Adrenal gland (tissue), 19 donors: ENCODE measurements at regions of chr10 and their contacts with region 1.

Region 1: DNA sequence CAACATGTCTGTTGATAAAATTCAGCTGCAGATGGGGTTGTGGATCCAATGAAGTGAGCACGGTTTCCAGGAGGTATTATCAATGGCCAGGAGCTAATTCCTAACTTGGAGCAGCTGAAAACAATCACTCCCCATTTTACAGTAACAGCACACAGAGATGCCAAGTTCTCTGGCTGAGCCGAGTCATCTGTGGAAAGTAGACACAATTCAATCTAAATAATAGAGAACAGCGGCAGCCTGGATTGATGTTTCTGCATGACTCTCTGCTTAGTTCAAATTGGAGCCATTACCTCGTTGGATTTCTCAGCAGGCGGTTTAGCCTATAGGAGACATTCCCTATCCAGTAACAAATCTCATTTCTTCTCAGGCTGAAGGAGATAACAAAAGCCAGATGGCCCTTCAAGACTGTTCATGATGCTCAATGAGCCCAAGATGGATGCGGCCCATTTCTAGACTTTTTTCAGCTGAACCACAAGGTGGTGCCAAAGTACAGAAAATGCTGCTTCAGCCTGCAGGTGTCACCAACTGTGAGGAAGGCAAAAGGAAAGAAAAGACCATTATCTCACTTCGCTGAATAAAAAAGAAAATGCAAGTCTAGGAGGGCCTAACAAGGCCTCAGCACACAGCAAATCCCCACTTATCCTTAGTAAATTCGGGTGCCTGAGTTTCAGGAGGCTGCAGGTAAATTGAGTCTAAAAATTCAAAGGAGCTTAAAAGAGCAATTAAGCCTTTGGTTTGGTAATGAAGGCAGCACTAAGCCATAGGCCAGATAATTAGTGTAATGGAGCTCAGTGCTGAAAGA is 83.7 kb downstream of the SLC16A9 start:
- DNase-seq: peak in 6 of 7 donors; percentile 43 to 75 (median 47)
- H3K4me3 ChIP-seq: no peak overlapping the region
- H3K27ac ChIP-seq: no peak overlapping the region
- H3K4me1 ChIP-seq: peaks cover 0 to 6% of the 10 kb centered on the region in 2 donors
- H3K27me3 ChIP-seq: no peaks in the 10 kb centered on the region
- CTCF ChIP-seq: peak; percentile 55 to 96 (median 94)
- POLR2A ChIP-seq: no peak

Region 2: DNA sequence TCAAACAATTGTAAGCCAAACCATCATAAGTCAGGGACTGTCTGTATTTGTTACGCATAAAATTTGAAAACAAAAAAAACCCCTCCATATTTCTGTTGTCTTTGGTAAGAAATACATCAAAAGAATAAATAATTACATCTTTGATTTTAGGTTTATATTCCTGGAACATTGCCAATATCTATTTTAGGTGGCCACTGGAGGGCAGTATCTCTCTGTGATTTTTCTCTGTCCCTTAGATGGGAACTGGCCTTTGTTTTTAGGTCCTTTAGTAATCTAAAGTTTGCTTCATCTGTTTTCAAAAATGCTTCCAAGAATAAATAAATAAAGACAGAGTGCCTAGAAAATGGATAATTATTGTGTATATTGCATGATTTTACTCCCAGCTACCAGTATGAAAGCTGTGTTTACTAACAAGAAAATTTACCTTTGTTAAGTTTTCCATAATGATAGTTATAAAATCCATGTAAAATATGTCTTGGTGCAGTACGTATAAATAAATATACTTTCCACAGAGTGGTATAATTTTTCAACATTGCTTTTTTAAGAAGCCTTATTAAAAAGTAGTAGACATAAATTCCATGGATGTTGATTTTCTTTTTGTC is 385.2 kb before region 1 on chr10:
- intact Hi-C with region 1: loop called in 1 of 2 experiments (anchors 10 kb)
- DNase-seq: peak in 1 of 7 donors; percentile 8
- H3K4me3 ChIP-seq: no peak overlapping the region
- H3K27ac ChIP-seq: no peak overlapping the region
- H3K4me1 ChIP-seq: no peaks in the 10 kb centered on the region
- H3K27me3 ChIP-seq: no peaks in the 10 kb centered on the region
- CTCF ChIP-seq: peak; percentile 53 to 86 (median 79)
- POLR2A ChIP-seq: no peak

Region 3: GRCh38 chr10:59734014-59734462 is 108.1 kb after region 1 on chr10:
- intact Hi-C with region 1: no loop called
- DNase-seq: no peak
- H3K4me3 ChIP-seq: no peak overlapping the region
- H3K27ac ChIP-seq: no peak overlapping the region
- H3K4me1 ChIP-seq: no peaks in the 10 kb centered on the region
- H3K27me3 ChIP-seq: no peaks in the 10 kb centered on the region
- CTCF ChIP-seq: no peak
- POLR2A ChIP-seq: no peak

Region 4: GRCh38 chr10:59808896-59809643 is 183.1 kb after region 1 on chr10:
- intact Hi-C with region 1: loop called (anchors 2 to 5 kb)
- DNase-seq: peak; percentile 82 to 95 (median 89)
- H3K4me3 ChIP-seq: no peak overlapping the region
- H3K27ac ChIP-seq: no peak overlapping the region
- H3K4me1 ChIP-seq: peaks cover 4 to 27% of the 10 kb centered on the region in 2 donors
- H3K27me3 ChIP-seq: no peaks in the 10 kb centered on the region
- CTCF ChIP-seq: peak; percentile 49 to 89 (median 82)
- POLR2A ChIP-seq: no peak

Region 5: GRCh38 chr10:59830601-59831259 is 204.8 kb after region 1 on chr10:
- intact Hi-C with region 1: loop called in 1 of 2 experiments (anchors 5 kb)
- DNase-seq: peak; percentile 58 to 82 (median 68)
- H3K4me3 ChIP-seq: no peak overlapping the region
- H3K27ac ChIP-seq: no peak overlapping the region
- H3K4me1 ChIP-seq: peaks cover 12 to 14% of the 10 kb centered on the region in 2 donors
- H3K27me3 ChIP-seq: no peaks in the 10 kb centered on the region
- CTCF ChIP-seq: peak; percentile 63 to 81 (median 72)
- POLR2A ChIP-seq: no peak

Region 6: DNA sequence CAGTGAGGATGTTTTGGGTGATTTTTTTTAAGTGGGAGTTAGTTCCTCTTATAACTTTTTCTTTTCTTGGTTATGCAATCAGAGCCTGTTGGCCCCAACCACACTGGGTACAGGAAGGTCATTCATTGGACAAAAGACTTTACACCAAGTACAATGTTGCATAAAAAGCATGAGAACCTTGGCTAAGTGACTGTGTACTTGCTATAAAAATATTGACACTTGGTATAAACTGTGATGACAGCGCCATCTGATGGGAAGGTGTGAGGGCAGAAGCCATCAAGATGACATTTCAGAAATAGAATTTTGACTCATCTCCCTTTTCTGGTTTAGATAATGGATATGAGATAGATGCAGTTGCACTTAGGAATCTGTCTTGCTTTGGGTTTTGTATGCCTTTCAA is 406.8 kb after region 1 on chr10:
- intact Hi-C with region 1: loop called in 1 of 2 experiments (anchors 10 kb)
- DNase-seq: peak; percentile 32 to 78 (median 48)
- H3K4me3 ChIP-seq: no peak overlapping the region
- H3K27ac ChIP-seq: no peak overlapping the region
- H3K4me1 ChIP-seq: no peaks in the 10 kb centered on the region
- H3K27me3 ChIP-seq: no peaks in the 10 kb centered on the region
- CTCF ChIP-seq: peak; percentile 12 to 52 (median 45)
- POLR2A ChIP-seq: no peak